Right ventricle myocardium superior (tissue), 1 donor: ENCODE measurements at regions of chr12 and their contacts with region 1.

Region 1: DNA sequence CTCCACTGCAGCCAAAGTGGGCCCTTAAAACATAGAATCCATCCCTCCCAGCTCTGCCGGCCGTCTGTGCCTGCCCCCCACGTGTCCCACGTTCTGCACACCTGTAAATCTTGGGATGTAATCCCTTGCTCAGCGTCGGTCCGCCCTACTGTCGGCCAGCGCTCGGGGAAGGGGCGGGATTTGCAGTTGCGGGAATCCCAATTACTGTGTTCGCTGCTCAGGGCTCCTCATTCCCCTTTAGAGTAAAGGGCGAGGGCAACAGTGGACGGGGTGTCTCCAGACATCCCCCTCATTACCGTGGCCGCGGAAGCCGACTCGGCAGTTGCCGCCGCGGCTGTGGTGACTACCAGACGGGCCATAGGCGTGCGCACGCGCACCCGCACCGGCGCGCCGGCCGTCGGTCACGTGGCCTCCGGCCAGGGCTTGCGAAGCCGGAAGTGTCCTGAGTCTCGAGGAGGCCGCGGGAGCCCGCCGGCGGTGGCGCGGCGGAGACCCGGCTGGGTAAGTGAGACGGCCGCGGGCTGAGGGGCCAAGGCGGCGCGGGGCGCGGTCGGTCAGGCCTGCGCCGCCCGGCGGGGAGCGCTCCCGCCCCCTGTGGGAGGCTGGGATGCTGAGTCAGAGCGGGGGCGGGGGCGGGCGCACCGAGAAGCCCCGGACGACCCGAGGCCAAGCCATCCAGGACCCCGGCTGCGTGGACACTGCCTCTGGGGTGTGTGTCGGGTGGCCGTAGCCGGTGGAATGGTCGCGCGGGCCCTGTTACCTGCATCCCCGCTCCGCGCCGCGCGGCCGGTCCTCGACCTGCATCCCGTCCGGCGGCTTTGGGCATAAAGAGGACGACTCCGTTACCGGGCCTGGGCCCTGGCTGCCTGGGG is at the start of gene TBK1:
- DNase-seq: peak; percentile 95
- ATAC-seq: peak; percentile 99
- total RNA-seq, gene TBK1: 11.6 TPM

Region 2: DNA sequence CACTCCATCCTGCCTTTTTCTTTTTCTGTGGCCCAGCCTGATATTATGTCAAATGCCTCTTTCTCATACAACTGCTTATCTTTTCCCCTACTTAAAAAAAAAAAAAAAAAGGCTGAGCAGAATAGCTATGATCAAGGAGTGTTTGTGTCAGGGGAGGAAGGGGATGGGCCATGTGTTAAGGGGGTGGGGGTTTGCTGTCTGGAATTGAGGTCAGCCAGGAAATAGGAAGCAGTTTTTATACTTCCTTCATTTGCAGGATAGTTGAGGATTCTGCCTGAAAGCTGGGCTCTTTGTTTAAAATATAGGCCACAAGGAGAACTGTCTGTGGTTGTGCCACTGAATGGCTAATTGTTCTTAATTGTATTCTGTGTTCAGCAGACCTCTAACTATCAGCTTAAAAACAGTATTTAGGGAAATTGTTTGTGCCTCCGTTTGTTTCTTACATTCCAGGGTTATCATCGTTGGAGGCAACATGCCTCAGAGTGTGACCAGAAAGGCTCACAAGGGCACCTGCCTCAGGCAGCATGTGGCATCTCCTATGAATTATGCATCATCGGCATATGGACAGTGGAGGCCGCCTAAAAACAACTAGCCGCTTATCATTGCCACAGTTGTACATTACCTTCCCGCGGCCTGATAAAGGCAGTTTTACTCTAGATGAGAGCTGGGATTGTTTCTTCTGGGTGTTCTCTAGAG is 511.5 kb before region 1 on chr12:
- intact Hi-C with region 1: no loop called
- DNase-seq: no peak
- ATAC-seq: peak; percentile 14

Region 3: GRCh38 chr12:64404470-64405256 is 47.3 kb before region 1 on chr12:
- intact Hi-C with region 1: loop called (anchors 5 kb)
- DNase-seq: peak; percentile 65
- ATAC-seq: peak; percentile 63